Posterior cingulate gyrus (tissue), 11 donors: ENCODE measurements at regions of chr11 and their contacts with region 1.

Region 1: GRCh38 chr11:11777897-11778296 is 63.9 kb upstream of the USP47 start:
- DNase-seq: no peak

Region 2: GRCh38 chr11:11641581-11641980 is 136.3 kb before region 1 on chr11:
- intact Hi-C with region 1: loop called (anchors 10 kb)
- DNase-seq: no peak

Region 3: GRCh38 chr11:11659567-11660362 is 118.1 kb before region 1 on chr11:
- intact Hi-C with region 1: no loop called
- DNase-seq: no peak